ENCODE measurements at regions of chr1 and their contacts with region 1.

Region 1: DNA sequence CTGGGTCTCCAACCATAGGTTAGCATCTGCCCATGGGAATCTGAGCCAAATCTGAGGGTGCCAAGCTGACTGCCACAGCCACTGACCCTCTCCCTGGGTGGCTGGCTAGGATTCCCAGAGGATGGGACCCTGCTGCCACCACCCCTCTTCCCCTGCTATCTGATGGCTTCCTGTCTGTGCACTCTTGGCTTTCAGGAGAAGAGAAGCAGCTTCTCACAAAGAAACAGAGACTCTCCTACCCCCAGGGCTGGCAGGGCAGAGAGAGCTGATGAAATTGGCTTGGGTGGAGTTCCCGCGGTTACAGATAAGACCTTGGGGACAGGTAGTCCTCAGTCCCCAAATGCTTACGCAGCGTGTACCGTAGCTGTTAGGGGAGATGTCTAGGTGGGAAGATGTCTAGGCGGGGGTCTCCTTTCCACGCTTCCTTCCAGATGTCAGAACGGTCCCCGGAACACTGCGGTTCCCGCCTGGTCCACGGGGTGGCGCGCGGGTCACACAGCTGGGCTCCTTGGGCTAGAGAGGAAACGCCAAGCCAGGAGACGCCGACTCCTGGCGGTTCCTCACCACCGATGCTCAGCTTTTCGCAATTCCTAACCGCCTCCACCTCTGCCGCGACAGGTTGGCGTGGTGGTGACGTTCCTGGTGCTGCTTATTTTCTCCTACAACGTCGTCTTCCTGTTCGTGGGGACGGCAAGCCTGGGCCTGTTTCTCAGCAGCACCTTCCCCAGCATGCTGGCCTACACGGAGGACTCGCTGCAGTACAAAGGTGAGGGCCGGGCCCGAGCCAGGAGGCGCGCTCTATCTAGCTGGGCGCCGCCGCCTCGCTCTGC is 40.1 kb downstream of the ELK4 start:
- DNase-seq: peak; percentile 94
- ATAC-seq: peak; percentile 82
- H3K4me3 Mint-ChIP-seq: peak overlapping the region; percentile 78
- H3K27ac Mint-ChIP-seq: peak overlapping the region; percentile 78
- H3K4me1 Mint-ChIP-seq: peaks cover 35% of the 10 kb centered on the region
- H3K27me3 Mint-ChIP-seq: no peaks in the 10 kb centered on the region

Region 2: GRCh38 chr1:205211169-205211838 is 380.4 kb before region 1 on chr1 and contains the start of gene DSTYK:
- CTCF ChIA-PET with region 1: no interaction called
- POLR2A ChIA-PET with region 1: no interaction called
- intact Hi-C with region 1: no loop called
- DNase-seq: peak; percentile 97
- ATAC-seq: peak; percentile 90
- H3K4me3 Mint-ChIP-seq: peak within 1 kb of the TSS; percentile 97
- H3K27ac Mint-ChIP-seq: peak within 1 kb of the TSS; percentile 95
- H3K4me1 Mint-ChIP-seq: peaks cover 54% of the 10 kb centered on the region
- H3K27me3 Mint-ChIP-seq: no peaks in the 10 kb centered on the region
- total RNA-seq, gene DSTYK: 9.4 to 12.3 TPM

Region 3: DNA sequence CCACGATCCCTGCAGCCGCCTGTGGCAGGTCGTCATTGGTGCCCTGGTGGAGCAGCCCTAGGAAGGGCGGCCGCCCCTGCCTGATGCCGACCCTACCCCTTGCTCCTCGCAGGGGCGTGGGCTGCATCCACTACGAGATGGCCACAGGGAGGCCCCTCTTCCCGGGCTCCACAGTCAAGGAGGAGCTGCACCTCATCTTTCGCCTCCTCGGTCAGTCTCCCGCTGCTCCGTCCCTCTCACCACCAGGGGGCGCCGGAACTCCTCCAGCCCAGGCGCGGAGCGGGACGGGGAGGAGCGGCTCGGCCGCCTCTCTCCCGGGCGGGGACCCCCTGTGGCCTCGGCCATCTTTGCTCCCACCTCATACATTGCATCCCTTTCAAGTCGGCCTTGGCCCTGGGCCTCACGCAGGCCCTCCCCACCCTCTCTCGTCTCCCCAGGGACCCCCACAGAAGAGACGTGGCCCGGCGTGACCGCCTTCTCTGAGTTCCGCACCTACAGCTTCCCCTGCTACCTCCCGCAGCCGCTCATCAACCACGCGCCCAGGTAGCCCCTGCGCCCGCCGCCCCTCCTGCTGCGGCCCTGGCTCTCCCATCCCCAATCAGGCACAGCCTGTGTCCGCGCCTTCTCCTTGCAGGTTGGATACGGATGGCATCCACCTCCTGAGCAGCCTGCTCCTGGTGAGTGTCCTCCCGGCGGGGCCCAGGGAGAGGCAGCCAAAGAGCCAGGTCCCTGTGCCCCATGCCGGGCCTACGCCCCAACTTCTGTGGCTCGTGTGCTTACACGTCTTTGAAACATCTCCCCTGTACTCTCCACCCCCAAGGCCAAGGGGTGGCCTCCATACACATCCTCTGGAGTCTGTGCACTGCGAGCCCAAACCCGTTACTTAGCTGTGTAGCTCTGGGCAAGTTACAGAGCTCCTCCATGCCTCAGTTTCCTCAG is 62.6 kb before region 1 on chr1:
- CTCF ChIA-PET with region 1: interaction called, 16 read pairs
- POLR2A ChIA-PET with region 1: interaction called, 5 read pairs
- intact Hi-C with region 1: loop called in 1 of 2 experiments (anchors 2 kb)
- DNase-seq: peak; percentile 91
- ATAC-seq: peak; percentile 90
- H3K4me3 Mint-ChIP-seq: no peak overlapping the region
- H3K27ac Mint-ChIP-seq: no peak overlapping the region
- H3K4me1 Mint-ChIP-seq: no peaks in the 10 kb centered on the region
- H3K27me3 Mint-ChIP-seq: no peaks in the 10 kb centered on the region

Region 4: DNA sequence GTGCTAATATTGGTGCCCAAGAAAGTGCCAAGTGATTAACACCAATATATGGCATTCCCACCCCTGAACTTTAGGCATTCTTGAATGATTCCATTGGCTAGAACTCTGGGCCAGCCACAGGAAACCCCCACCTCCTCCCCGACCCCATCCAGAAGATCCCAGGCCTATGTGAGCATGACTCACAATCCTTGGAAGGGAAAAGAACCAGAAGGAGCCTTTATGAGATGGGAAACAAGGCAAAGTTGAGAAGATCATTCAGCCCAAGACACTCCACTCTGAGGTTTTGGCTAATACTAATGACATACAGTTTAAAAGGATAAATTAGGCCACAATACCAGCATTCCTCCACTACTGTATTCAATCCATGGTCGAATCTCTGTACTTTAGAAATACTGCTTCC is 18.3 kb after region 1 on chr1:
- CTCF ChIA-PET with region 1: interaction called, 24 read pairs
- POLR2A ChIA-PET with region 1: no interaction called
- intact Hi-C with region 1: no loop called
- DNase-seq: no peak
- ATAC-seq: no peak
- H3K4me3 Mint-ChIP-seq: no peak overlapping the region
- H3K27ac Mint-ChIP-seq: peak overlapping the region; percentile 51
- H3K4me1 Mint-ChIP-seq: peaks cover 44% of the 10 kb centered on the region
- H3K27me3 Mint-ChIP-seq: no peaks in the 10 kb centered on the region

Region 5: DNA sequence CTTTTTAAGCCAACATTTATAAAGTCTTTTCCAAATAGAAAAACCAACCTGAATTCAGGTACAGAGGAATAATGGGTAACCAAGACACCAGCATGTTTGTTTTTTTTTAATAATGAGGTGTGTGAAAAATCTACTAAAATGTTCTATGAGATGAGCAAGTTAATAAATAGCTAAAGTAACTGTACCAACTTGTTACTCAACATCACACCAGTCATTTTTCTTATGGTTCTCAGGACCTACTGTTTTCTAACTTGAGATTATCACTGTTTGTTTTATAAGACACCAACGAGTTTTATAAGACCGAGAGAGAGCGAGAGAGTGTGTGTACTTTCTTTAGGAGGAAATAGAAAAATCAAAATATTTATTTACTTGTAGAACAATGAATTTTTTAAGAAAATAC is 27.6 kb after region 1 on chr1:
- CTCF ChIA-PET with region 1: interaction called, 24 read pairs
- POLR2A ChIA-PET with region 1: no interaction called
- intact Hi-C with region 1: no loop called
- DNase-seq: no peak
- ATAC-seq: no peak
- H3K4me3 Mint-ChIP-seq: no peak overlapping the region
- H3K27ac Mint-ChIP-seq: peak overlapping the region; percentile 74
- H3K4me1 Mint-ChIP-seq: peaks cover 26% of the 10 kb centered on the region
- H3K27me3 Mint-ChIP-seq: no peaks in the 10 kb centered on the region

Region 6: GRCh38 chr1:205711104-205712020 is 119.6 kb after region 1 on chr1:
- CTCF ChIA-PET with region 1: interaction called, 29 read pairs
- POLR2A ChIA-PET with region 1: no interaction called
- intact Hi-C with region 1: loop called (anchors 2 kb)
- DNase-seq: peak; percentile 78
- ATAC-seq: peak; percentile 90
- H3K4me3 Mint-ChIP-seq: no peak overlapping the region
- H3K27ac Mint-ChIP-seq: peak overlapping the region; percentile 43
- H3K4me1 Mint-ChIP-seq: peaks cover 13% of the 10 kb centered on the region
- H3K27me3 Mint-ChIP-seq: no peaks in the 10 kb centered on the region

Region 7: GRCh38 chr1:205812878-205813754 is 221.4 kb after region 1 on chr1 and contains the start of gene SLC41A1:
- CTCF ChIA-PET with region 1: interaction called, 3 read pairs
- POLR2A ChIA-PET with region 1: interaction called, 5 read pairs
- intact Hi-C with region 1: loop called in 1 of 2 experiments (anchors 2 kb)
- DNase-seq: peak; percentile 94
- ATAC-seq: peak; percentile 96
- H3K4me3 Mint-ChIP-seq: peak within 1 kb of the TSS; percentile 81
- H3K27ac Mint-ChIP-seq: peak within 1 kb of the TSS; percentile 84
- H3K4me1 Mint-ChIP-seq: peaks cover 47% of the 10 kb centered on the region
- H3K27me3 Mint-ChIP-seq: no peaks in the 10 kb centered on the region
- total RNA-seq, gene SLC41A1: 34.4 to 41.5 TPM

Measured in activated CD4-positive, alpha-beta T cell treated with anti-CD3 and anti-CD28 coated beads for 36 hours (primary cell).